PC-9 (cell line): ENCODE measurements at regions of chr17 and their contacts with region 1.

Region 1: GRCh38 chr17:55433629-55434305 is 12.1 kb upstream of the MMD start:
- DNase-seq: peak; percentile 64 to 98
- H3K4me3 ChIP-seq: peak overlapping the region; percentile 50
- H3K27ac ChIP-seq: peak overlapping the region; percentile 97
- H3K4me1 ChIP-seq: peaks cover 62% of the 10 kb centered on the region
- H3K27me3 ChIP-seq: no peaks in the 10 kb centered on the region
- CTCF ChIP-seq: no peak

Region 2: GRCh38 chr17:55356434-55357328 is 77.1 kb before region 1 on chr17:
- CTCF ChIA-PET with region 1: no interaction called
- POLR2A ChIA-PET with region 1: no interaction called
- intact Hi-C with region 1: loop called (anchors 2 kb)
- DNase-seq: peak; percentile 51 to 56
- H3K4me3 ChIP-seq: no peak overlapping the region
- H3K27ac ChIP-seq: no peak overlapping the region
- H3K4me1 ChIP-seq: no peaks in the 10 kb centered on the region
- H3K27me3 ChIP-seq: no peaks in the 10 kb centered on the region
- CTCF ChIP-seq: peak; percentile 92

Region 3: GRCh38 chr17:55421179-55421934 is 12.4 kb before region 1 on chr17 and contains the start of gene MMD:
- CTCF ChIA-PET with region 1: no interaction called
- POLR2A ChIA-PET with region 1: no interaction called
- intact Hi-C with region 1: loop called (anchors 1 kb)
- DNase-seq: no peak
- H3K4me3 ChIP-seq: peak within 1 kb of the TSS; percentile 97
- H3K27ac ChIP-seq: no peak within 1 kb of the TSS
- H3K4me1 ChIP-seq: peaks cover 21% of the 10 kb centered on the region; the same call in 1 of the 2 replicates
- H3K27me3 ChIP-seq: no peaks in the 10 kb centered on the region
- CTCF ChIP-seq: no peak
- total RNA-seq, gene MMD: 7.2 and 9.9 TPM in 2 replicates

Region 4: DNA sequence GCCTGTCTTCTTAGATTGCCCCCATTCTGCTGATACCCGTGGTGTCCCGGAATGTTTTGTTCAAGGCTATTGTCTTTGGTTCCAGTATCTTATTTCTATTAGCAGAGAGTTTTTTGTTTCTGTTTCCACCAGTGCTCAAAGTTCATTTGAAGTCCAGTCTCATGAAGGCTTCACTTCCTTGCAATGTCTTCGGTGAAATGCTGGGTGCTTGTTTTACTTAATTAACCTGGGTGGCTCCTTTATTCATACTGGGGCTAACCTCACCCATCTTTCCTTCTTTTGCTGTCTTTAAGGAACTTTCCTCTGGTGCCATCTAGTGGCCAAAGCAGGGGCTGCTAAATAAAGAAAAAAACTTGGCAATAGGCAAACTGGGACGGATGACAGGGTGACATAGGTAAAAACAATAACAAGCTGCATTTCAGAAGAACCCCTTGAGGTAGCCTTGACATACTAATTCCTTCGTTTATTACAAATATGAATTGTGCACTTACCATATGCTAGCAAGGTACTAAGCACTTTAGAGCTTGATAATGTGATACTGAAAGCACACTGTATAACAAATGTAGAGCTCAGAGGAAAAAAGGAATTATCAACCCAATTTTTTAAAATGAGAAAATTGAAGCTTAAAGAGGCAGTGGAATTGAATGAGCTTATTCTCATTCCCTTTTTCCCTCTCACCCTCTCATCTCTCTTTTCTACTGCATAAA is 80.3 kb after region 1 on chr17:
- CTCF ChIA-PET with region 1: no interaction called
- POLR2A ChIA-PET with region 1: no interaction called
- intact Hi-C with region 1: loop called (anchors 1 kb)
- DNase-seq: peak; percentile 64 to 68
- H3K4me3 ChIP-seq: no peak overlapping the region
- H3K27ac ChIP-seq: no peak overlapping the region
- H3K4me1 ChIP-seq: no peaks in the 10 kb centered on the region
- H3K27me3 ChIP-seq: 0 out of 2 replicates have a peak, but pooled peaks cover 3% of the 10 kb centered on the region
- CTCF ChIP-seq: peak; percentile 97

Region 5: GRCh38 chr17:55576996-55577586 is 143.3 kb after region 1 on chr17:
- CTCF ChIA-PET with region 1: no interaction called
- POLR2A ChIA-PET with region 1: no interaction called
- intact Hi-C with region 1: loop called (anchors 1 kb)
- DNase-seq: no peak
- H3K4me3 ChIP-seq: no peak overlapping the region
- H3K27ac ChIP-seq: peak overlapping the region; percentile 27; the same call in 1 of the 2 replicates
- H3K4me1 ChIP-seq: peaks cover 14% of the 10 kb centered on the region; the same call in 1 of the 2 replicates
- H3K27me3 ChIP-seq: no peaks in the 10 kb centered on the region
- CTCF ChIP-seq: no peak

Region 6: GRCh38 chr17:56699186-56699895 is 1265.6 kb after region 1 on chr17:
- CTCF ChIA-PET with region 1: no interaction called
- POLR2A ChIA-PET with region 1: no interaction called
- intact Hi-C with region 1: loop called (anchors 2 kb)
- DNase-seq: peak; percentile 94 to 100
- H3K4me3 ChIP-seq: peak overlapping the region; percentile 26; the same call in 1 of the 2 replicates
- H3K27ac ChIP-seq: peak overlapping the region; percentile 81
- H3K4me1 ChIP-seq: peaks cover 41% of the 10 kb centered on the region
- H3K27me3 ChIP-seq: no peaks in the 10 kb centered on the region
- CTCF ChIP-seq: no peak